Tibial artery (tissue), 4 donors: ENCODE measurements at regions of chr21 and their contacts with region 1.

Region 1: DNA sequence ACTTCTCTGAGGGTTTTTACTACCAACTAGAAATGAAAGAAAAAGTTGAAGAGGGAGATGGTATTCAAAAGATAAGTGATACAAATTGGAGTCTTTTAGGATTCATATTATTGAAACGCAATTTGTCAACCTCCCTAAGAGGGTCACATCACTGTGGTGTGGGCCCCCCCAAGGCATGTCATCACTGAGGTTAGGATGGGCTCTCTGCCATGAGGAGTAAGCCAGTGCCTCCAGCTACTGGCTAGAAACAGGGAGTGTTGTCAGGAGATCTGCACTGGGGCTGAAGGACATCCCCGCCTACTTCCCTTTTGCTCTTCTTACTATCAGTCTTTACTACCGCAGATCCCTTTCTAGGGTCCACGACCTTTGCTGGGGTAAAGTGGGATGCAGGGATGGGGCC is 25.9 kb downstream of the ITSN1 start:
- DNase-seq: no peak
- H3K4me3 ChIP-seq: no peak overlapping the region
- H3K27ac ChIP-seq: no peak overlapping the region
- H3K4me1 ChIP-seq: peaks cover 0 to 4% (median 3%) of the 10 kb centered on the region in 4 donors
- H3K27me3 ChIP-seq: no peaks in the 10 kb centered on the region
- CTCF ChIP-seq: no peak

Region 2: DNA sequence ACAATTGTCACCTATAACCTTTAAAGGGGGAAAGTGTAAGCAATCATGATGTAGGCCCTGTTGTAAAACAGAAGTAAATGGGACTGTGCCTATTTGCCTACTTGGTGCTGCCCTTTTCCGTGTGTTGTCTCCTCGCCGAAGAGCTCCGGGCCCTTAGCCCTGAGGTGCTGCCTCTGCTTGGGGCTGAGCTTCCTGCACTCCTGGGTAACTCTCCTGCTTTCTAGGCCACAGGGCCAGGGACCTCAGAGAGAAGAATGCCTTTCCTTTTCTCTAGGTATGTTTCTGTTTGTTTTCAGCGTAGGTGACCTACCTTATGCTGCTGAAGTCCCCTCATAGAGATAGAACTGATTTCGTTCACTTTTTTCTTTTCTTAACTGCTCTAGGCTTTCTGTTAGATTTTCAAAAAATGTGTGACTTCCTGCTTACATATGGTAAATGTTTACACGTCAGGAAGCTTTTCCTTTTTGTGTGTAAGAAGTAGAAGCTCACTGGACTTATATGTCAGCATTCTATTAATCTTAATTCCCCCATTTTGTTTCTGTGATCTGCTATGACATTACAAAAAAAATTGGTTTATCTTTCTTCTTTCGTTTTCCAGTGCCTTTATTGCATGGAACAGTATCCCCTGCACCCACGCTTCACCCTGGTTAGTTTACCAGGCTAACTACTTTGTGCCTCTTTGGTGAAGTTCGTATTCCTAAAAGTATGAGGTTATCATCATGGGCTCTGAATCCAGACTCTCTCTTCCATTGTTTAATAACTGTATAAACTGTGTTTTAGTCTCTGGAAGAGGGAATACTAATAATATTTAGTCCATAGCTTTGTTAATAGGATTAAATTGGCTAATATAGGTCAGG is 35.8 kb after region 1 on chr21:
- intact Hi-C with region 1: loop called (anchors 5 kb)
- DNase-seq: no peak
- H3K4me3 ChIP-seq: no peak overlapping the region
- H3K27ac ChIP-seq: no peak overlapping the region
- H3K4me1 ChIP-seq: peaks cover 0 to 10% (median 0%) of the 10 kb centered on the region in 4 donors
- H3K27me3 ChIP-seq: no peaks in the 10 kb centered on the region
- CTCF ChIP-seq: no peak

Region 3: GRCh38 chr21:33780631-33781030 is 112.5 kb after region 1 on chr21:
- intact Hi-C with region 1: no loop called
- DNase-seq: no peak
- H3K4me3 ChIP-seq: no peak overlapping the region
- H3K27ac ChIP-seq: no peak overlapping the region
- H3K4me1 ChIP-seq: peaks cover 0 to 16% (median 0%) of the 10 kb centered on the region in 4 donors
- H3K27me3 ChIP-seq: no peaks in the 10 kb centered on the region
- CTCF ChIP-seq: no peak

Region 4: DNA sequence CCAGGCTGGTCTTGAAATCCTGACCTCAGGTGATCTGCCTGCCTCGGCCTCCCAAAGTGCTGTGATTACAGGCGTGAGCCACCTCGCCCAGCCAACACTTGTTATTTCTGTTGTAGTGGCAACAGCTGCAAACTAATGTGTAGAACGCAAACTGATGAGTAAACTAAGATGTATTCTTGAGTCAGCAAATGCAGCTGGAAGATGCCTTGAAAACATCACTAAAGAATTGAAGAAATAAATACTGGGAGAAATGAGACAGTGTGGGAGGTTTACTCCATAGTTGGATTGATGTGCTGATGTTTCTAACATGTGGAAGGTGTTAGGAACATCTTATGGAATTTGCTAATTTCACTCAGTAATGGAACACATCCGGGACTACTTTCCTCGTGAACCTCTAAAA is 634.3 kb after region 1 on chr21:
- intact Hi-C with region 1: no loop called
- DNase-seq: no peak
- H3K4me3 ChIP-seq: no peak overlapping the region
- H3K27ac ChIP-seq: no peak overlapping the region
- H3K4me1 ChIP-seq: peaks cover 0 to 27% (median 10%) of the 10 kb centered on the region in 4 donors
- H3K27me3 ChIP-seq: no peaks in the 10 kb centered on the region
- CTCF ChIP-seq: no peak